ENCODE measurements at regions of chr10 and their contacts with region 1.

Region 1: DNA sequence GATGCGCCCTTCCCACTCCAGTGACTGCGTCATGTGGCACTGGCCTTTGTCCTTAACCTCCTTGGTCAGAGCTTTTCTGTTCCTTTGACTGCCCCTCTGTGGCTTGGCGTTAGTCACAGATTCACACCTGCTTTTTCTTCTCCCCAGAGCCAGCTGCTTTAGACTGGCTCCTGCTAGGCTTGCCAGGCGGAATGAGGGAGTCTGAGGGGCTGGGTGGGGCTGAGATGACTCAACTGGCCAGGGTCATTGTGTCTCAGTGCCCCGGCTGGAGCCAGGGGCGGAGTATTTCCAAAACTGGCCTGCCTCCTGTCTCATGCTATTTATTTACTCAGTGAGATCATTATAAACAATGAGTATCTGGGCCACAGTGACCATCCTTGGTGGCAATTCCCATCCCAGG is 194.1 kb downstream of the EMX2 start:
- DNase-seq: no peak
- H3K4me3 Mint-ChIP-seq: no peak overlapping the region
- H3K27ac Mint-ChIP-seq: no peak overlapping the region
- H3K4me1 Mint-ChIP-seq: no peaks in the 10 kb centered on the region
- H3K27me3 Mint-ChIP-seq: peaks cover 29% of the 10 kb centered on the region

Region 2: DNA sequence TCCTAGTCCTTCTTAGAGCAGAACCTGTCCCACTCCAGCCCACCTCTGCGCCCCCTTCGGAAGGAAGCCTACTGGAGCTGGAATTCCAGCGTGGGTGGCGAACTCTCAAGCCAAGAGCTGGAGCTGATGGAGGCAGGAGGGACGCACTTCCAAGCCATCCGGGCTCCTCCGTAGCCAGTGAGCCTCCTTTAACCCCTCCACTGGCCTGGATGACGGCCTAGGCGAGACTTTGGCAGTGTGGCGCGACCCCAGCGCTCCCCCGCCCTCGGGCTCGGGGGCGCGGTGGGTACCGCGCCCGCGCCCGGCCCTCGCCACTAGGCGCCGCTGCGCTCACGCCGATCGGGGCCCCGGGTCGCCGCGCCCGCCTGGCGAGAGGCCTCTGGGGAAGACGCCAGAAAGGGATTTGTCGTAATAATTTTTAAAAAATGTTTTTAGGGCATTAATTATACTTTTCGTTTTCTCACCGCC is 199.2 kb before region 1 on chr10:
- CTCF ChIA-PET with region 1: no interaction called
- POLR2A ChIA-PET with region 1: no interaction called
- intact Hi-C with region 1: loop called (anchors 10 kb)
- DNase-seq: peak; percentile 39
- H3K4me3 Mint-ChIP-seq: no peak overlapping the region
- H3K27ac Mint-ChIP-seq: no peak overlapping the region
- H3K4me1 Mint-ChIP-seq: peaks cover 18% of the 10 kb centered on the region
- H3K27me3 Mint-ChIP-seq: peaks cover 66% of the 10 kb centered on the region